Endothelial cell of umbilical vein (primary cell): ENCODE measurements at regions of chr1 and their contacts with region 1.

Region 1: GRCh38 chr1:37434292-37434907 is 40.0 kb upstream of the ZC3H12A start:
- DNase-seq: peak; percentile 48
- H3K4me3 ChIP-seq: no peak overlapping the region
- H3K27ac ChIP-seq: no peak overlapping the region
- H3K4me1 ChIP-seq: no peaks in the 10 kb centered on the region
- H3K27me3 ChIP-seq: no peaks in the 10 kb centered on the region
- CTCF ChIP-seq: peak; percentile 93 to 99
- POLR2A ChIP-seq: no peak

Region 2: DNA sequence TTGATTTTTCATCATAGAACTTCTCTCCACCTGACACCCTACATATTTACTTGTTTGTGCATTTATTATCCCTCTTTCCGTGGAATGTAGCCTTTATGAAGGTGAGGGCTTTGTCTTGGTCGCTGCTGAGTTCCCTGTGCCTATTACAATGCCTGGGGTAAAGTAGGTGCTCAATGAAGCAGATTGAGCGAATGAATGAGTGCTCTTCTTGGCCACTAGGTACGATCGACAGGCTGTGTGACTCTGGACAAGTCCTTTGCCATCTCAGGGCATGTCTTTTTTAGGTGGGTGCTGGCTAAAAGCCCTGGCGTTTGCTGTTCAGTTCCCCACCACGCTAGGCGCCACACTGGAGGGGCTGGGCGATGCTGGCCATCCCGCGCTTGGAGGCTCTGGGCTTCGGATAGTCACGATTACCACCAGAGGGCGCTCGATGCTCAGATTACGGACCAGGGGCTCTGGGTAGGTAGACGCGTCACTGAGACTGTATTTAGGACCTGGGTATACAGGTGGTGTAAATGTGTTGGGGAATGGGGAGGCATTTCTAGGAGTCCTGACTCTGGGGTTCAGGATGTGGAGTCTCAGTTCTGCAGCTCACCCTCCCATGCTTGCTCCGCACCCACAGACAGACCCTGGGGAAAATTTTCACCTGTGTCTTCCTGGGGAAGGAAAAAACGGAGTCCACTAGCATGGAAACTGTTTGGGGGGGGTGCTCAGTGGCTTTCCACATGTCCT is 880.6 kb before region 1 on chr1:
- CTCF ChIA-PET with region 1: interaction called, 8 read pairs
- POLR2A ChIA-PET with region 1: no interaction called
- dilution Hi-C with region 1: no loop called
- intact Hi-C with region 1: loop called (anchors 1 kb)
- DNase-seq: peak; percentile 39
- H3K4me3 ChIP-seq: no peak overlapping the region
- H3K27ac ChIP-seq: no peak overlapping the region
- H3K4me1 ChIP-seq: no peaks in the 10 kb centered on the region
- H3K27me3 ChIP-seq: peaks cover 8 to 11% of the 10 kb centered on the region in 2 experiments
- CTCF ChIP-seq: peak; percentile 74 to 78
- POLR2A ChIP-seq: no peak

Region 3: DNA sequence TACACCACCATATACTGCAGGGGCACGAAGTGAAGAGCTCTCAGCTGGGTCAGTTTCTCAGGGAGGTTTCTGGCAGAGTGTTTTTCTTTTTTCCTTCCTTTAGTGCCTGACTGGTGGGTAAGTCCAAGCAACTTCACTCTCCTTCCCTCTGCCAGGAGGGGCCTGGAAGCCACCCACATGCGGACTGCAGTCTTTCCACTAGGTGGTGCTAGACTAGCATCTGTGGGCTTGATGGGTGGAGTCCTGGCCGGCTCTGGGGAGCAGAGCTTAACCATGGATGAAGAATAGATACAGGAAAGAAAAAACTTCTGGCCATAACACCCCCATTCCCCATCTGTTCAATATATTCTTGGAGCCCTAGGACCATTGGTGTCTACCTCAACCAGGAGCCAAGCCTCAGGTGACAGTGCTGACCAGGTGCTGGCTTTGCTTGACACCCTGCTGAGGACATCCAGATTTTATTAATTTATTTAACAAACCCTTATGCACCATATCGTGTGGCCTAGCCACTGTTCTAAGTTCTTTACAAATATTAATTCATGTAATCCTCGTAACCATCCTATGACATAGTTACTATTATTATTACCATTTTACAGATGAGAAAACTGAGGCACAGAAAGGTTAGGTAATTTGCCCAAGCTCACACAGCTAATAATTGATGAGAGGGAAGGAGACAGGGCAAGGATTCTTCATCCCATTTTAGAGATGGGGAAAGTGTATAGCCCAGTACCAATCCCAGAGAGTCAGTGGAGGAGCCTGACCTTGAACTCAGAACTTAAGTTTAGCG is 825.0 kb before region 1 on chr1:
- CTCF ChIA-PET with region 1: interaction called, 10 read pairs
- POLR2A ChIA-PET with region 1: no interaction called
- dilution Hi-C with region 1: no loop called
- intact Hi-C with region 1: loop called (anchors 1 kb)
- DNase-seq: peak; percentile 31
- H3K4me3 ChIP-seq: no peak overlapping the region
- H3K27ac ChIP-seq: no peak overlapping the region
- H3K4me1 ChIP-seq: no peaks in the 10 kb centered on the region
- H3K27me3 ChIP-seq: no peaks in the 10 kb centered on the region
- CTCF ChIP-seq: peak; percentile 66
- POLR2A ChIP-seq: no peak

Region 4: DNA sequence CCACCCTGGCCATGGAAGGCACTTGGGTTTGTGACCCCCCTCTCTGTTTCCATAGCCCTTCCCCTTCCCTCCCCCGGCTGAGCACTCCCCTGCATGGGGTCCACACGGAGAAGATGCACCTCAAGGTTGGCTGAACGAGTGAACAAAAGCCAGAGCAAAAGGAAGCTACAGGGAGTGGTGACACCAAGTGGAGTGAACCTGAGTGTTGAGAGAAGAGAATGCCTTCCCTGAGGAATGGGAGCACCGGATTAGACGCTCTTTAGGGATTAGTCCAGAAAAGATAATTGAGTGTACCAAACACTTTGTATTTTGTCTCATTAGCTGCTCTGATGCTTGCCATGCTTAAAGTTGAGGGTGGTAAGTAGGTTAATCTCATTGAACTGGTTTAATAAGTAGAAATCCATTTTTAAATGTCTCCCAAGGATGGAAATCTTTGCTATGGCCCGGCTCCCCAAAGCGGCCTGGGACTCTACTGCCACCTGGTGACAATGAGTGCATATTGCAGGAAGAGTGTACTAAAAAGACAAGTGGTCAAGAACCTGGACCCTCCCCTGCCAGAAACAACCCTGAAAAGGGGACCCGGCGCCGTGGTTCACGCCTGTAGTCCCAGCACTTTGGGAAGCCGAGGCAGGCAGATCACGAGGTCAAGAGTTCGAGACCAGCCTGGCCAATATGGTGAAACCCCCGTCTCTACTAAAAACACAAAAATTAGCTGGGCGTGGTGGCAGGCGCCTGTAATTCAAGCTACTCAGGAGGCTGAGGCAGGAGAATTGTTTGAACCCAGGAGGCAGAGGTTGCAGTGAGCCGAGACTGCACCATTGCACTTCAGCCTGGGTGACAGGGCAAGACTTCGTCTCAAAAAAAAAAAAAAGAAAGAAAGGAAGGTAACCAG is 110.7 kb before region 1 on chr1:
- CTCF ChIA-PET with region 1: interaction called, 5 read pairs
- POLR2A ChIA-PET with region 1: no interaction called
- dilution Hi-C with region 1: no loop called
- intact Hi-C with region 1: loop called (anchors 10 kb)
- DNase-seq: peak; percentile 32
- H3K4me3 ChIP-seq: no peak overlapping the region
- H3K27ac ChIP-seq: no peak overlapping the region
- H3K4me1 ChIP-seq: no peaks in the 10 kb centered on the region
- H3K27me3 ChIP-seq: peaks cover 0 to 3% of the 10 kb centered on the region in 2 experiments
- CTCF ChIP-seq: peak; percentile 67 to 75
- POLR2A ChIP-seq: no peak

Region 5: GRCh38 chr1:37423810-37424209 is 10.6 kb before region 1 on chr1:
- CTCF ChIA-PET with region 1: interaction called, 11 read pairs
- POLR2A ChIA-PET with region 1: no interaction called
- dilution Hi-C with region 1: no loop called
- intact Hi-C with region 1: no loop called
- DNase-seq: no peak
- H3K4me3 ChIP-seq: no peak overlapping the region
- H3K27ac ChIP-seq: no peak overlapping the region
- H3K4me1 ChIP-seq: no peaks in the 10 kb centered on the region
- H3K27me3 ChIP-seq: no peaks in the 10 kb centered on the region
- CTCF ChIP-seq: no peak
- POLR2A ChIP-seq: no peak

Region 6: GRCh38 chr1:37461469-37462436 is 27.4 kb after region 1 on chr1:
- CTCF ChIA-PET with region 1: no interaction called
- POLR2A ChIA-PET with region 1: no interaction called
- dilution Hi-C with region 1: no loop called
- intact Hi-C with region 1: no loop called
- DNase-seq: peak; percentile 42
- H3K4me3 ChIP-seq: no peak overlapping the region
- H3K27ac ChIP-seq: no peak overlapping the region
- H3K4me1 ChIP-seq: no peaks in the 10 kb centered on the region
- H3K27me3 ChIP-seq: no peaks in the 10 kb centered on the region
- CTCF ChIP-seq: no peak
- POLR2A ChIP-seq: no peak